ENCODE measurements at regions of chrX and their contacts with region 1.

Region 1: GRCh38 chrX:129606918-129607317 is 47.8 kb downstream of the APLN start:
- DNase-seq: peak; percentile 64
- H3K4me3 Mint-ChIP-seq: no peak overlapping the region
- H3K27ac Mint-ChIP-seq: no peak overlapping the region
- H3K4me1 Mint-ChIP-seq: no peaks in the 10 kb centered on the region
- H3K27me3 Mint-ChIP-seq: peaks cover 18% of the 10 kb centered on the region
- CTCF ChIP-seq: peak; percentile 70

Region 2: DNA sequence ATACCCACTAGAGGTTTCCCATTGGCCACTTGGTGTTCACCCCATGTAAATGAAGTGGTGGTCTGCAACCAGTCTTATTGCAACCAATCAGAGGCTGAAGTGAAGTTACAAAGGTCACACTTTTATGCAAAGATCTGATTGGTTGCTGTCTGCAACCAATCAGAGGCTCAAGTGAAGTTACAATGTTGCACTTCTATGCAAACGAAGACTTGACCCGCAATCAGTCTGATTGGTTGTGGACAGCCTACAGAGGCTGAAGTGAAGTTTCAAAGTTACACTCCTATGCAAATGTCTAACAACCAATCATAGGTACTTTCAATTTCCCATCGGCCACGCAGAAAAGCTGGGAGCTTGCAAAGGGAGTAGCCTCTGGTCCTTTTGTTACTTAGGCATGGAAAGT is 109.6 kb after region 1 on chrX:
- CTCF ChIA-PET with region 1: no interaction called
- intact Hi-C with region 1: no loop called
- DNase-seq: no peak
- H3K4me3 Mint-ChIP-seq: no peak overlapping the region
- H3K27ac Mint-ChIP-seq: no peak overlapping the region
- H3K4me1 Mint-ChIP-seq: peaks cover 7% of the 10 kb centered on the region
- H3K27me3 Mint-ChIP-seq: peaks cover 44% of the 10 kb centered on the region
- CTCF ChIP-seq: no peak

Region 3: DNA sequence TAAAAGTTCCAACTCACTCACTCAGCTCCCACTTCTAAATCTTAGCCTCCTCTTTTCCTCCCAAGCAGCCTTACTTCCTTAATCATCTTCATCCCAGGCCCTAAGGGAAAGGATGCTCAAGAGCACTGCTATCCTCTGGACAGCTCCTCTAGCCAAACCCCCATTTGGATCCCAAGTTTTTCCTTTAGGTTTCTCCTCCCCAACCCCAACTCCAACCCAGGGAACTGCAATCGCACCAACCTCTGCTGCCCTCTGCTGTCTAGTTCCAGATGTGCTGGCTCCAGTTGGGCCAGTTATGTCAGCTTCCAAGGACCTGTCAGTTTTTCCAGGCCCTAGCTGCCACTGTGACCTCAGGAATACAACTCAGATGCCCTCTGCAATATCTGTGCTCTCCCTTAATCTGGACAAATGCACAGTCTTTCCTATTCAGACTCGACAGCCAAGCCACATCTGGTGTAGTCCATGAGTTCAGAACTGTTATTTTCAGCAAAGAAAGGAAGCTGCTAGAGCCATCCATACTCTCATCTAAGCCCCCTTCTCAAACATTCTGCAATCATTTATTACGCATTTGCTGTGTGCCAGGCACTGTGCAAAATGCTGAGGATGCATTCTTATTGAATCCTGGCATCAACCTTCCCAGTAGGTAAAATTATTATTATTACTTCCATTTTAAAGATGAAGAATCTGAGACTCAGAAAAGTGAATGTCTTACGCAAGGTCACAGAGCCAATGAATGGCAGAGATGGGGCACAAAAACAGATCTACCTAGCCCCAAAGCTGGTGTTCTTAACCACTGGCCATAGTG is 119.6 kb after region 1 on chrX:
- CTCF ChIA-PET with region 1: no interaction called
- intact Hi-C with region 1: loop called (anchors 1 kb)
- DNase-seq: peak; percentile 68
- H3K4me3 Mint-ChIP-seq: no peak overlapping the region
- H3K27ac Mint-ChIP-seq: no peak overlapping the region
- H3K4me1 Mint-ChIP-seq: no peaks in the 10 kb centered on the region
- H3K27me3 Mint-ChIP-seq: peaks cover 65% of the 10 kb centered on the region
- CTCF ChIP-seq: peak; percentile 55

Region 4: GRCh38 chrX:129823115-129823514 is 216.2 kb after region 1 on chrX:
- CTCF ChIA-PET with region 1: no interaction called
- intact Hi-C with region 1: loop called (anchors 1 kb)
- DNase-seq: peak; percentile 45
- H3K4me3 Mint-ChIP-seq: no peak overlapping the region
- H3K27ac Mint-ChIP-seq: no peak overlapping the region
- H3K4me1 Mint-ChIP-seq: no peaks in the 10 kb centered on the region
- H3K27me3 Mint-ChIP-seq: no peaks in the 10 kb centered on the region
- CTCF ChIP-seq: peak; percentile 51

Region 5: GRCh38 chrX:130028196-130028595 is 421.3 kb after region 1 on chrX:
- CTCF ChIA-PET with region 1: no interaction called
- intact Hi-C with region 1: loop called (anchors 1 kb)
- DNase-seq: peak; percentile 68
- H3K4me3 Mint-ChIP-seq: no peak overlapping the region
- H3K27ac Mint-ChIP-seq: no peak overlapping the region
- H3K4me1 Mint-ChIP-seq: no peaks in the 10 kb centered on the region
- H3K27me3 Mint-ChIP-seq: no peaks in the 10 kb centered on the region
- CTCF ChIP-seq: peak; percentile 73

Region 6: GRCh38 chrX:130196466-130196865 is 589.5 kb after region 1 on chrX:
- CTCF ChIA-PET with region 1: no interaction called
- intact Hi-C with region 1: loop called (anchors 10 kb)
- DNase-seq: no peak
- H3K4me3 Mint-ChIP-seq: no peak overlapping the region
- H3K27ac Mint-ChIP-seq: no peak overlapping the region
- H3K4me1 Mint-ChIP-seq: no peaks in the 10 kb centered on the region
- H3K27me3 Mint-ChIP-seq: no peaks in the 10 kb centered on the region
- CTCF ChIP-seq: no peak